ENCODE measurements at regions of chr6 and their contacts with region 1.

Region 1: DNA sequence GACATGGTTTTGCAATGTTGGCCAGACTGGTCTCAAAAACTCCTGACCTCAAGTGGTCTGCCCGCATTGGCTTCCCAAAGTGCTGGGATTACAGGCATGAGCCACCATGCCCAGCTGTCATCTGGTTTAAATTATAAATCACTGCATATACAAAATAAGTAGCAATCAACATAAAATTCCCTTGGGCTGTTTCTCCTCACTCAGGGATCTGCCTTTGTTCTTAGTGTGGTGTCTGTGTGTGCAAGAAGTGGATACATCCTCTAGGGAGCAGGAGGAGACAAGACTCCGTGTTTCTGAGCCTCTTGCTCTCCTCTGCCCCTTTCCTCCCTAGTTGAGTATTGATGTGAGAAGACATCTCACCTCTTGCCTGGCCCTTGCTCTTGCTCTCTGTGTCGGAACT is 65.2 kb upstream of the ADGRF4 start:
- DNase-seq: no peak
- H3K4me3 ChIP-seq: no peak overlapping the region
- H3K27ac ChIP-seq: no peak overlapping the region
- H3K4me1 ChIP-seq: peaks cover 0 to 6% (median 0%) of the 10 kb centered on the region in 4 donors
- H3K27me3 ChIP-seq: no peaks in the 10 kb centered on the region
- CTCF ChIP-seq: no peak
- EP300 ChIP-seq: no peak
- POLR2A ChIP-seq: no peak

Region 2: DNA sequence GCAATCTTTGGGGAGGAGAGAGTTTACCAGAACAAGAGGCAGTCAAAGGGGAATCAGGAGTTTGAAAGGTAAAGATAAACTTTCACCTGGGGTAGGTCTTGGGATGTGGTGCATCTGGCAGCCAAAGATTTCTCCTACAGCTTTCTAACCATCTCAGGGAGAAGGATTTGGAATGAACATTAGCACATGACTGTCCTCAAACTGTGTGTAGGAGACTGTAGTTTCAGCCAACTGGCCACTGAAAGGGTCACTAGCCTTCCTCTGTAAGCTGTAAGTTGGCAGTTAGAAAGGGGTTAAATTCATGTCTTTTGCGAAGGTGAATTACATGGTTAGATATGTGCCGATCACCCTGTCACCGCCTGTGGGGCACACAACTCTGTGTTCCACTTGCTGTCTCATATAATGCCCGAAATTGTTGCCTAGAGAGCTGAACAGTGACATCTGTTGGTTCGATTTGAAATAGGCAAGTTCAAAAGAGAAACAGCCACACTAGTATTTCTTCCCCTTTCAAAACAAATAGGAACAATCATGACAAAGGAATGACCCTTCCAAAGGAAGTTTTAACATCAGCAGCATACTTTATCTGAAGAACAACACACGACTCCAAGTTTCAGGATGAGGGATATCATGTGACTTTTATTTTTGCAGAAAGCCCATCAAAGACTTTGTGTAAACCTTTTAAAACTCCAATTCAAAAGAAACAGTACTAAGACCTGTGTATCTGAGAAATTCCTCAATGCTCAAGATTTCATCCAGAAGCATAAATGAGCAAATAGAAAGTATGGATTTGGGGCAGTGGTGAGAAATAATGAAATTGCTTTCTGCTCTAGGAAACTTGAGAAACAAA is 147.6 kb after region 1 on chr6:
- intact Hi-C with region 1: loop called (anchors 2 kb)
- DNase-seq: no peak
- H3K4me3 ChIP-seq: no peak overlapping the region
- H3K27ac ChIP-seq: no peak overlapping the region
- H3K4me1 ChIP-seq: peaks cover 0 to 4% (median 2%) of the 10 kb centered on the region in 4 donors
- H3K27me3 ChIP-seq: no peaks in the 10 kb centered on the region
- CTCF ChIP-seq: peak in 3 of 4 experiments; percentile 48 to 60 (median 50)
- EP300 ChIP-seq: no peak
- POLR2A ChIP-seq: no peak